ENCODE measurements at regions of chr17 and their contacts with region 1.

Region 1: GRCh38 chr17:40075201-40075941 is 12.6 kb downstream of the THRA start:
- DNase-seq: peak; percentile 80
- H3K4me3 Mint-ChIP-seq: no peak overlapping the region
- H3K27ac Mint-ChIP-seq: peak overlapping the region; percentile 34
- H3K4me1 Mint-ChIP-seq: peaks cover 19% of the 10 kb centered on the region
- H3K27me3 Mint-ChIP-seq: no peaks in the 10 kb centered on the region

Region 2: GRCh38 chr17:40019140-40019991 is 56.0 kb before region 1 on chr17:
- CTCF ChIA-PET with region 1: interaction called, 34 read pairs
- POLR2A ChIA-PET with region 1: no interaction called
- intact Hi-C with region 1: no loop called
- DNase-seq: no peak
- H3K4me3 Mint-ChIP-seq: no peak overlapping the region
- H3K27ac Mint-ChIP-seq: no peak overlapping the region
- H3K4me1 Mint-ChIP-seq: no peaks in the 10 kb centered on the region
- H3K27me3 Mint-ChIP-seq: no peaks in the 10 kb centered on the region

Region 3: DNA sequence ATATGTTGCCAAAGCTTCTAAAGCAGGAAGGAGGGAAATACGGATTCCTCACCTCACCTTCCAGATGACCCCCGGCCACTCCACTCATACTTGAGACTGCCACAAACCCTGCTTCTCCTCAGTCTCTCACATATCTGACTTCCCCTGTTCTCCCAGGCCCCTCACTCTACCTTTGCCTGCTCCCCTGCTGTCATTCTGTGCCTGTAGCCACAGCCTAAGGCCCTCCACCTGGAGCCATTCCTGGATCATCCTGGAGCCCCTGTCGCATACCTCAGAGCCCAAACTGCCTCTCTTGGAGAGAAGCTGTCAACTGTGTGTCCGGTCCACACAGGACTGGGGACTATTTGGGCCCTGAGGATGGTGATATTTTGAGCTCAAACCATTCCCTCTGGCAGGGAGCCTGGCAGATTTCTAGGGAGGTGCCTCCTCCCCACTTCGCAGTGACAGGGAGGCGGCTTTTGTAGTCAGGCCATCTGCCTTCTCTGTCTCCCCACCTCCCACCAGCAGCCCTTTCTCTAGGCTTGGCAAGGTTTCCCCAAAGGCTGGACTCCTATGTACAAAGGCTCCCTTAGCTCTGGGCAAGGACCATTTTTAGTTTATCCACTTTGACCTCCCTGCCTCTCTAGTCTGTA is 18.9 kb before region 1 on chr17:
- CTCF ChIA-PET with region 1: interaction called, 156 read pairs
- POLR2A ChIA-PET with region 1: no interaction called
- intact Hi-C with region 1: no loop called
- DNase-seq: no peak
- H3K4me3 Mint-ChIP-seq: no peak overlapping the region
- H3K27ac Mint-ChIP-seq: no peak overlapping the region
- H3K4me1 Mint-ChIP-seq: peaks cover 11% of the 10 kb centered on the region
- H3K27me3 Mint-ChIP-seq: peaks cover 1% of the 10 kb centered on the region

Region 4: GRCh38 chr17:40086150-40087044 is 11.0 kb after region 1 on chr17:
- CTCF ChIA-PET with region 1: interaction called, 84 read pairs
- POLR2A ChIA-PET with region 1: no interaction called
- intact Hi-C with region 1: no loop called
- DNase-seq: peak; percentile 66
- H3K4me3 Mint-ChIP-seq: no peak overlapping the region
- H3K27ac Mint-ChIP-seq: no peak overlapping the region
- H3K4me1 Mint-ChIP-seq: no peaks in the 10 kb centered on the region
- H3K27me3 Mint-ChIP-seq: no peaks in the 10 kb centered on the region

Region 5: DNA sequence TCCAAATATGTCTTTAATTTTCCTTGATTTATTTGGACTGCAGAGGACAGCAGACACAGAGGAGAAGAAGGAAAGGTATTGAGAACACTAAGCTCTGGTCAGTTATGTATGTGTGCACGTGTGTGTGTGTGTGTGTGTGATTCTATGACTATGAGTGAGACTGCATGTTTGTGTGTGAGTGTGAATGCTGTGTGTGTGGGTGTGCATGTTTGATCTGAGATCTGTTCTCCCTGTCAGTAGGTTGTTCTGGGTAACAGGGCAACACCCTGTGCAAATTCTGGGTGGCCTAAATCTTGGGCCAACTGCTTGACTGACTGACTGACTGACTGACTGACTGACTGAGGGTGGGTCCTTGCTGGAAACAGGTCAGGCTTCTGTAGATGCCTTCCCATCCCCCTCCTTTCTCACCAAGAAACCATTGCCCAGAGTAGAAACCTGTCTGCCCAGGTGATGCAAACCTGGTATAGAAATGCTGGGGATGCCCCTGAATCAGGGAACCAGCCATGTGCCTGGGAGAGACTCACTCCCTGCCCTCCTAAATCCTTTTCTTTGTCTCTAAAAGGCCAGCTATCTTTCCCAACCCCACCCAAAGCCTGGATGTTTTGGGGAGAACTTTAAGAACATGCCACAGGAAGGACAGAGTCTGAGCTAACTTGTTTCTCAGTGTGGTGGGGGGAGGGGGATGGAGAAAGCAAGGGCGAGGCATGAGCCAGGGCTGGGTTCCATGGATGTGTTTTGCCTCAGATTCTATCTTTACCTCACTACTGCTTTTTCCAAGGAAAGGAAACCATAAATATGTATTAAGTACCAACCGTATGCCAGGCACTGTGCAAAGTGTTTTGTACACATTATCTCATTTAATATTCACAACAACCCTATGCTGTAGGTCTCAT is 29.5 kb after region 1 on chr17:
- CTCF ChIA-PET with region 1: interaction called, 52 read pairs
- POLR2A ChIA-PET with region 1: no interaction called
- intact Hi-C with region 1: no loop called
- DNase-seq: no peak
- H3K4me3 Mint-ChIP-seq: no peak overlapping the region
- H3K27ac Mint-ChIP-seq: peak overlapping the region; percentile 75
- H3K4me1 Mint-ChIP-seq: peaks cover 84% of the 10 kb centered on the region
- H3K27me3 Mint-ChIP-seq: no peaks in the 10 kb centered on the region